ENCODE measurements at regions of chr12 and their contacts with region 1.

Region 1: GRCh38 chr12:42144408-42145196 is at the start of gene GXYLT1:
- DNase-seq: peak; percentile 70 to 81 (median 75)
- H3K4me3 ChIP-seq: peak within 1 kb of the TSS; percentile 71
- H3K4me3 Mint-ChIP-seq: peak within 1 kb of the TSS; percentile 89 to 99 (median 96)
- H3K27ac ChIP-seq: peak within 1 kb of the TSS; percentile 32
- H3K27ac Mint-ChIP-seq: peak within 1 kb of the TSS; percentile 84 to 97 (median 93)
- H3K4me1 ChIP-seq: peaks cover 28% of the 10 kb centered on the region
- H3K4me1 Mint-ChIP-seq: peaks cover 44 to 55% (median 53%) of the 10 kb centered on the region in 3 donors
- H3K27me3 ChIP-seq: no peaks in the 10 kb centered on the region
- H3K27me3 Mint-ChIP-seq: no peaks in the 10 kb centered on the region
- total RNA-seq, gene GXYLT1: 11.6 to 13.2 TPM

Region 2: DNA sequence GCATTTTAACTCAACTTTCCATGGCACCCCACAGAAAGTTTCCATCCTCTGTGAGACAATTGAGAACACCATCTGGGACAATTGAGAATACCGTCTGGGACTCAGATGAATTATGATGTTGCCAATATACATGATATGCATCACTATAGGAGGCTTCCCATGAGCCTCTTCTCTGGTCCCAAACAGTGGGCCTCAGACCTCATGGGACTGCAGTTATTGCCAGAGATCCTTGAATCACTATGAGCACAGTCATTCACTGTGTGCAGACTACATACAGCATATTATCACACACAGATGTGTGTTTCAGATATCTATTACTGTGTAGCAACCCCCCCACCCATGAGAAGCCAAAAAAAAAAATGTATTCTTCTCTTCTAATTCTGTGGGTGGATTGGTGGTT is 134.3 kb before region 1 on chr12:
- CTCF ChIA-PET with region 1: no interaction called
- POLR2A ChIA-PET with region 1: no interaction called
- DNase-seq: no peak
- H3K4me3 ChIP-seq: no peak overlapping the region
- H3K4me3 Mint-ChIP-seq: no peak overlapping the region
- H3K27ac ChIP-seq: no peak overlapping the region
- H3K27ac Mint-ChIP-seq: no peak overlapping the region
- H3K4me1 ChIP-seq: no peaks in the 10 kb centered on the region
- H3K4me1 Mint-ChIP-seq: no peaks in the 10 kb centered on the region
- H3K27me3 ChIP-seq: no peaks in the 10 kb centered on the region
- H3K27me3 Mint-ChIP-seq: peaks cover 0 to 4% of the 10 kb centered on the region in 2 donors

Region 3: GRCh38 chr12:42180990-42181596 is 36.5 kb after region 1 on chr12:
- CTCF ChIA-PET with region 1: no interaction called
- POLR2A ChIA-PET with region 1: no interaction called
- DNase-seq: no peak
- H3K4me3 ChIP-seq: no peak overlapping the region
- H3K4me3 Mint-ChIP-seq: no peak overlapping the region
- H3K27ac ChIP-seq: no peak overlapping the region
- H3K27ac Mint-ChIP-seq: peak overlapping the region in 2 of 8 donors; percentile 22 to 25
- H3K4me1 ChIP-seq: no peaks in the 10 kb centered on the region
- H3K4me1 Mint-ChIP-seq: peaks cover 22 to 42% (median 31%) of the 10 kb centered on the region in 3 donors
- H3K27me3 ChIP-seq: no peaks in the 10 kb centered on the region
- H3K27me3 Mint-ChIP-seq: no peaks in the 10 kb centered on the region

Region 4: DNA sequence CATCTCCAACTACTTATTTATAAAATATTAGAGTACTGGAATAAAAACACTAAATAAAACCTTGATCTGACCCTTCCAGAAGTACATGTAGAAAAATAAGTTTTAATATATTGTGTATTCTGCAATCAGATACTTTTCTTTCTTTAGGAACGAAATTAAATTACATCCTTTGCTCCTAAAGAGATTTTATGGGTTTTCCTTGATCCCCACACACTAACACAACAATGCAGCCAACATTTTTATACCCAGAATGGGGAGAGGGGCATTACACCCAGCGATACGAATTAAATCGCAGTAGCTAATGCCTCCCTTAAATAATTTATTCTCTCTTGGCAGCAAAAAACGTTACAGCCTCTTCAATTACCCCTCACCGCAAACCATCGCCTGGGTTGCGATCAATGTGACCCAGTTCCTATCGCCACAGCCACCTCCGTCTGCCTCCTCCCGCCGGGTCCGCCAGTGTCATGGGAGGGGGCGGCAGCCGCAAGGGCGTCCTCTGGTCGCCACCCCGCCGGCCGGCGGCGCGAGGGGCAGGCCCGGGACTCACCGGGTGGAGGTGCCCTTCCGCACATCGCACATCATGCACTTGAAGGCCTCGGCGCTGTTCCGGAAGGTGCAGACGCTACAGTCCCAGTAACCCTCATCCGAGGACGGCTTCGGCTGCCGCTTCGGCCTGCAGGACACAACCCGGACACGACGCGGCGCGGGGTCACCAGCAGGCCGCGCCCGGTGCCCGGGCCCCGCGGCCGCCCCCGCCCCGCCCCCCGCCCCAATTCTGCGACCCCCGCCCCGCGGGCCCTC is 92.7 kb after region 1 on chr12:
- CTCF ChIA-PET with region 1: no interaction called
- POLR2A ChIA-PET with region 1: interaction called, 10 read pairs
- DNase-seq: peak; percentile 61 to 84 (median 75)
- H3K4me3 ChIP-seq: peak overlapping the region; percentile 76
- H3K4me3 Mint-ChIP-seq: peak overlapping the region; percentile 86 to 96 (median 92)
- H3K27ac ChIP-seq: peak overlapping the region; percentile 58
- H3K27ac Mint-ChIP-seq: peak overlapping the region; percentile 77 to 98 (median 94)
- H3K4me1 ChIP-seq: peaks cover 44% of the 10 kb centered on the region
- H3K4me1 Mint-ChIP-seq: peaks cover 47 to 63% (median 59%) of the 10 kb centered on the region in 3 donors
- H3K27me3 ChIP-seq: no peaks in the 10 kb centered on the region
- H3K27me3 Mint-ChIP-seq: peaks cover 0 to 3% of the 10 kb centered on the region in 2 donors

Measured in CD8-positive, alpha-beta memory T cell (primary cell).